ENCODE measurements at regions of chr19 and their contacts with region 1.

Region 1: GRCh38 chr19:47210689-47211316 is 20.2 kb downstream of the BBC3 start:
- DNase-seq: peak; percentile 77 to 85
- ATAC-seq: peak; percentile 61 to 63
- H3K4me3 ChIP-seq: no peak overlapping the region
- H3K27ac ChIP-seq: peak overlapping the region; percentile 76 to 82
- H3K4me1 ChIP-seq: peaks cover 16% of the 10 kb centered on the region
- CTCF ChIP-seq: peak; percentile 92
- EP300 ChIP-seq: no peak
- POLR2A ChIP-seq: no peak
- RAD21 ChIP-seq: peak; percentile 85 to 88

Region 2: DNA sequence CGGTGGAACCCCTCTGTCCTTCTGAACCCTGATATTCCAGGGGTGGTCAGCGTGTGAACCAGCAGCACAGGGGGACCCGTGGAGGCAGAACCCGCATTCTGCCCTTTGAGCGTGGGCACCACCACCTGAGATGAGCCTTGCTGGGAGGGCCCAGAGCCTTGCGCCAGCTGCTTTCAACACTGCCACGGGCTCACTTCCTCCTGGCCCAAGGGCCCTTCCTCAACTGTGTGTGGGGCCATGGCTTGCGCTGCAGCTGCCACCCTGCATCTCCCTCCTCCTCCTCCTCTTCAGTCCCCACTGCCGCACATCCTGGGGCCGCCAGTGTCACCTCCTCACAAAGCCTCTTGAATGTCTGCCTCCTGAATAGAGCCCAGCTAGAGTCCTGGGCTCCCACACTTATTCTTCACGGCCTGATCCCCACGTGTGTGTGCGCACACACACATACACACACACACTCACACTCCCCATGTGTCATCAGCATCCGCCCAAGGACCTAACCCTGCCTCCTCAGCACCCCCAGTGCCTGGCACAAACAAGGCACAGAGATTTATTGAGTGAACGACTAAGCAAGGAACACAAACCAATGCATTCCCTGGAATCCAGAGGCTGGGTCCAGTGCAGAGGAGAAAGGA is 135.5 kb before region 1 on chr19:
- CTCF ChIA-PET with region 1: interaction called, 10 read pairs
- POLR2A ChIA-PET with region 1: no interaction called
- DNase-seq: no peak
- ATAC-seq: no peak
- H3K4me3 ChIP-seq: no peak overlapping the region
- H3K27ac ChIP-seq: no peak overlapping the region
- H3K4me1 ChIP-seq: peaks cover 8% of the 10 kb centered on the region
- CTCF ChIP-seq: no peak
- EP300 ChIP-seq: no peak
- POLR2A ChIP-seq: no peak
- RAD21 ChIP-seq: no peak

Region 3: DNA sequence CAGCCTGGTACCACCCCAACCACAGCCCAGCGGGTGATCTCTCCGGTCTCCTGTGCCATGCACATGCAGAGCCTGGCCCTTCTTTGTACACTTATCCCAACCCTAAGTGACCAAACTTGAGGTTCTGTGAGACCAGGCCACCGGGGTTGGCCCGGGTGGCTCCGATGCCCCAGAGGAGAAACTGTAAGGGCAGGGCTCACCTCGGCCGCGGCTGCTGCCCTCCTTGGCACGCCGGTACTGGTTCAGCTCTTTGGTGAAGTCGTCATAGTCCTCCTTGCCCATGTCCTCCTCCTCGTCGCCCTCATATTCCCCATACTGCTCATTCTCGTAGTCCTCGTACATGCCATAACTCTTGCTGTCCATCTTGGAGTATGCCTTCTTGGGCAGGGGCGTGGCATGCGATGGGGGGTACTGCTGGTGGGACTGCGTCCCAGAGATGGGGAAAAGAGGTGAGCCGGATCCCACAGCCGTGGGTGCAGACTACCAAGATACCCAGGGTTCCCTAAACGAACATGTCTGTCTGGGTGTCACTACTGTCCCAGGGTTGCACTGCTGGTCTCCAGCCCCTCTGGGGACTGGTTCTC is 120.9 kb before region 1 on chr19:
- CTCF ChIA-PET with region 1: no interaction called
- POLR2A ChIA-PET with region 1: no interaction called
- DNase-seq: no peak
- ATAC-seq: no peak
- H3K4me3 ChIP-seq: no peak overlapping the region
- H3K27ac ChIP-seq: no peak overlapping the region
- H3K4me1 ChIP-seq: peaks cover under 1% of the 10 kb centered on the region; the same call in 2 of the 3 replicates
- CTCF ChIP-seq: no peak
- EP300 ChIP-seq: no peak
- POLR2A ChIP-seq: no peak
- RAD21 ChIP-seq: no peak

Region 4: DNA sequence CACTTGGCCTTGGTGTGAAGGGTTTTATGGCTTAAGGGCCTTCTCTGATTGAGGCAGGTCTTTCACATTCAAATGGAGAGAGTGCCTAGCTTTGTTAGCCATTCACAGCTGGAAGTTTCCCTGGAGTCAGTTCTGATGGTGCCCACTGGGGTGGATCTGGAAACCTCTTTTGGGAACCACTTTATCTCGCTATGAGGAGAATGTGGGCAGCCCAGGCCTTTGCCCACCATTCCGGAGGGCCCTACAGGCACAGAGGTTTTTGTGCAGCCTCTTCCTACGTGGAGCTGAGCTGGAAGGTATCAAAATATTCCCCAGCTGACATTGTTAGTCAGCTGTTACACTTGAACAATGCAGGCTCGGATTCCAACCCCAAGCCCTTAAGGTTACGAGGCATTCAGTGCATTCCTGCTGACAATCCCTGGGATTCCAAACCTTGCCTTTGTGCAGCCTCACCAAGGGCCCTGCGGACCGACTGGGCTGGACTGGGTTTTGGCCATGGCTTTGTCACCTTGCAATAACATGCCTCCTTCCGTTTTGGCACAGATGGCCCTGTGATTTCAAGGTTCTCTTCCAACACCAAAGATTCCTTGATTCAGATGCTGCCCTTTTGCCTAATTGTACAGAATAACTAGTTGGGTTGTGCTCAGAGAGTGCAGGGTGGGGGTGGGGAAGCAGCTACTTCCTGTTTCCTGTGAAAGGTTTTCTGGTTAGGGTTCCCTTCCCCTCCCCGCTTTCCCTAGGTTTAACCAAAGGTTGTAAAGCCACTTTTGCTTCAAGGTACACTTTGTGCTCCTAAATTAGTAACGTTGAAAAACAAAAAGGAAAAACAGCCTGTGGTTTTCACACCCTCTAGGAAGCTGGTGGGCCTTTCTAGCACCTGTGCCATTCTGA is 53.1 kb before region 1 on chr19:
- CTCF ChIA-PET with region 1: interaction called, 76 read pairs
- POLR2A ChIA-PET with region 1: no interaction called
- DNase-seq: no peak
- ATAC-seq: peak; percentile 42 to 54; a peak in 4 of 6 replicates
- H3K4me3 ChIP-seq: no peak overlapping the region
- H3K27ac ChIP-seq: peak overlapping the region in 1 of 2 experiments; percentile 63; a peak in 3 of 6 replicates
- H3K4me1 ChIP-seq: peaks cover 29% of the 10 kb centered on the region
- CTCF ChIP-seq: no peak
- EP300 ChIP-seq: no peak
- POLR2A ChIP-seq: no peak
- RAD21 ChIP-seq: no peak

Region 5: GRCh38 chr19:47183601-47184000 is 27.2 kb before region 1 on chr19:
- CTCF ChIA-PET with region 1: interaction called, 20 read pairs
- POLR2A ChIA-PET with region 1: no interaction called
- DNase-seq: no peak
- ATAC-seq: peak; percentile 26 to 32; a peak in 2 of 6 replicates
- H3K4me3 ChIP-seq: no peak overlapping the region
- H3K27ac ChIP-seq: 0 out of 6 replicates have a peak overlapping the region, but pooled peaks of 1 of the 2 experiments have one; percentile 4
- H3K4me1 ChIP-seq: peaks cover 10% of the 10 kb centered on the region
- CTCF ChIP-seq: no peak
- EP300 ChIP-seq: no peak
- POLR2A ChIP-seq: no peak
- RAD21 ChIP-seq: no peak

Region 6: DNA sequence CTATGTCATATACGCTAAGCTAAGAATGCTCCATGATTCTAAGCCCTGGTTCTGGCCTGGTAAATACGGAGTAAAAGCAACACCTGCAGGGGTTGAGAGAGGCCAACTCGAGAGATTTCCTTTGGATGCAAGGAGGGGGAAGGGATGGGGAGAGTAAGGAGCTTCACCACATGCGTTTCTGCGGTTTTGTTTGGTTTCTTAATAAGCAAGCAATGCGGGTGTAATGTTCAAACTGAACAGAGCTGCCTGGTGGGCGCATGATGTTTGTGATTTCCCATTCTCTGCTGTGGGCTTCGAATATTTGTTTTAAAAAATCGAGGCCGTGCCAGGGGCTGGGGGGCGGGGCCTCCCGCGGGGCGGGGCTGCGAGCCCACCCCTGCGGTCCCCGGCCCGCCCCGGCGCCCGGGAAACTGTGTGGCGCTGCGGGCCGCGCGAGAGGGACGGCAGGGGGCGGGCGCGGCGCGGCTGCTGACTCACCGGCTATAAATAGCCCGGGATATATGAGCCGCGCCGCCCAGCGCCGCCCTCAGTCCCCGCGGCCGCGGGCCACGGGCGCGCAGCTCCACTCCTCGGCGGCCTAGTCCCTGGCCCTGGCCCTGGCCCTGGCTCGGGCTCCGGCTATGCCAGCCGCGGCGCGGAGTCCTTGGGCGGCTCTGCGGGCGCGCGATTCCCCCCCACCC is 15.1 kb after region 1 on chr19:
- CTCF ChIA-PET with region 1: interaction called, 174 read pairs
- POLR2A ChIA-PET with region 1: interaction called, 87 read pairs
- DNase-seq: peak; percentile 89 to 91
- ATAC-seq: peak; percentile 35 to 70
- H3K4me3 ChIP-seq: peak overlapping the region; percentile 89
- H3K27ac ChIP-seq: peak overlapping the region; percentile 97 to 98
- H3K4me1 ChIP-seq: peaks cover 36% of the 10 kb centered on the region
- CTCF ChIP-seq: peak; percentile 28; the same call in 1 of the 3 replicates
- EP300 ChIP-seq: peak in 1 of 2 experiments; percentile 51; a peak in 1 of 5 replicates
- POLR2A ChIP-seq: peak; percentile 100
- RAD21 ChIP-seq: peak in 1 of 2 experiments; percentile 30; a peak in 1 of 5 replicates

Region 7: DNA sequence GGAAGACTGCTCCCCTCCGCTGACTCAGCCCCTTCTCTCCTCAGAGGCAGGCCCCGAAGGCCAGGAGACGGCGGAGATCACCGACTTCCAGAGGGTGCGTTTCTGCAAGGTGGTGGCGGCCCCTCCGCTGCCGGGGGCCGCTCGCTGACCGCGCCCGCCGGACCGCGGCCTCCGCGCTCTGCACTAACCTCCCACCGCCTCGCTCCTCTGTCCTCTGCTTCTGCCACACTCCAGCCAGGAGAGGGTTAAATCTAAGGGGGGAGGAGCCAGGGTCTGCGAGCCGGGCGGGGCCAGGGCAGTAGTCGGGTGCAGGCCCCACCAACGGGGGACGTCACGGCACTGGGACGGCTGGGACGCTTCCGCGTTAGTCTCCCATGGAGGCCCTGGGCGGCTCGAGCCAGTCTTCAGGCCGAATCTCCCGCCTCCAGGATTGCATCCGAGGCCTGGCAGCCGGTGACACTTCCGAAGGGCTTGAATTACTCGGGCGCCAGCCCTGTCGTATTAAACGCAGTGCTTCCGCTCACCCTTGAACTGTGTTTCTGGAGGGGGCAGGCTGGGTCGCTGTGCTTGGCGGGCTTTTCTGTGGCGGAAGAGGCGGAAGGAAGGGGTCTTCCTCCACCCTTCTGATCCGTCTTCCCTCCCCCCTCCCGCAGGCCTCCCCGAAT is 62.6 kb after region 1 on chr19:
- CTCF ChIA-PET with region 1: interaction called, 10 read pairs
- POLR2A ChIA-PET with region 1: no interaction called
- DNase-seq: peak; percentile 96
- ATAC-seq: peak; percentile 66 to 89
- H3K4me3 ChIP-seq: peak overlapping the region; percentile 59
- H3K27ac ChIP-seq: peak overlapping the region; percentile 80 to 90
- H3K4me1 ChIP-seq: peaks cover 15% of the 10 kb centered on the region
- CTCF ChIP-seq: no peak
- EP300 ChIP-seq: no peak
- POLR2A ChIP-seq: peak; percentile 41
- RAD21 ChIP-seq: no peak

Region 8: DNA sequence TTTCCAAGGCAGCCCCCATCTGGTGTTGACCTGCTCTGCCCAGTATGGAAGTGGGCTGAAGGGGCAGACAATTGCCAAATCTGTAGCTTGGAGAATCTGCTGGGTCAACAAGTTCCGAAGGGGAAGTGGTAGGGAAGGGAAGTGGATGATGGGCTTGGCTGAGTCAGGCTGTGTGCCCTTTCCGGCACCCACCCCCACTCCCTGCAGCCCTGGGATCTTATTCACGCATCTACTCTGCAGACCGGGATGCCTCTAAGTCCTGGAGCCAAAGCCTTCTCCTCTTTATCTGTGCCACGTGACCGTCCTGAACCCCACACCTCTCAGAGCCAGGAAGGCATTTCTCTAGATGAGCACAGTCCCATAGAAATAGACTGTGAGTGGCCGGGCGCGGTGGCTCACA is 113.7 kb after region 1 on chr19:
- CTCF ChIA-PET with region 1: no interaction called
- POLR2A ChIA-PET with region 1: no interaction called
- DNase-seq: no peak
- ATAC-seq: peak in 1 of 2 experiments; percentile 12; a peak in 1 of 6 replicates
- H3K4me3 ChIP-seq: no peak overlapping the region
- H3K27ac ChIP-seq: peak overlapping the region in 1 of 2 experiments; percentile 51; a peak in 3 of 6 replicates
- H3K4me1 ChIP-seq: no peaks in the 10 kb centered on the region
- CTCF ChIP-seq: no peak
- EP300 ChIP-seq: no peak
- POLR2A ChIP-seq: no peak
- RAD21 ChIP-seq: no peak

Region 9: DNA sequence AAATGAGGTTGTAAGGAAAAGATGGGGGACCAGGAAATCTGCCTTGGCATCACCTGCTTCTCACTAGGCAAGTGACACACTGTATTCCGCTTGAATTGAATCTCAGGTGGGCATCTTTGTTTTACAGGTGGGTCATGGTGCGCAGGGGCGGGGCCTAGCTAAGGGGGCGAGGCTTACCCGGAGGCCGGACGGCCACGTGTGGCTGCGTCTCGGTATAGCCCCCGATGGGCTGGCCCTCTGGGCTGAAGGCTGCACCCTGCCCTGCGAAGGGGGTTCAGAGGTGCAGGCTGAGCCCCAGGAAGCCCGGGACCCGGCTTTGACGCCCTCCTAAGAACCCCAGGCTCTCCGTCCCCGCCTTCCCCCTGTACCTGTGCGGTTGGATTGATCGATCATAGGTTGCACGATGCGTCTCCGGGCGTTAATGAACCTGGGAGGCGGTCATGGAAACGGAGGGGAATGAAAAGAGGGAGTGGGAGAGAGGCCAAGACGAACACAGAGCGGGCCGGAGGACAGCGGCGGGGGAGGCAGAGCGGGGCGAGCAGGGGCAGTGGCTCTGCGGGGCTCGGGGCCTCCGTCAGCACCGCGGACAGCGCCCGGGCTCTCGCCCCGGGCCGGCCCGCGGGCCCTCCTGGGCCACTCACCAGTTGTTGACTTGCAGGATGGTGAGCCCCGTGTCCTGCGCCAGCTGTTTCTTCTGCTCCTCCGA is 196.1 kb after region 1 on chr19:
- CTCF ChIA-PET with region 1: no interaction called
- POLR2A ChIA-PET with region 1: no interaction called
- DNase-seq: no peak
- ATAC-seq: peak; percentile 31 to 50; a peak in 5 of 6 replicates
- H3K4me3 ChIP-seq: no peak overlapping the region
- H3K27ac ChIP-seq: no peak overlapping the region
- H3K4me1 ChIP-seq: no peaks in the 10 kb centered on the region
- CTCF ChIP-seq: no peak
- EP300 ChIP-seq: no peak
- POLR2A ChIP-seq: no peak
- RAD21 ChIP-seq: no peak

Measured in A549 (cell line).